CD8-positive, alpha-beta memory T cell (primary cell): ENCODE measurements at regions of chr7 and their contacts with region 1.

Region 1: GRCh38 chr7:1065263-1066260 is 21.2 kb downstream of the GPR146 start:
- DNase-seq: peak; percentile 73 to 86 (median 78)
- H3K4me3 ChIP-seq: peak overlapping the region; percentile 50
- H3K4me3 Mint-ChIP-seq: peak overlapping the region in 6 of 7 donors; percentile 45 to 76 (median 63)
- H3K27ac ChIP-seq: no peak overlapping the region
- H3K27ac Mint-ChIP-seq: peak overlapping the region in 1 of 8 donors; percentile 85
- H3K4me1 ChIP-seq: peaks cover 8% of the 10 kb centered on the region
- H3K4me1 Mint-ChIP-seq: peaks cover 2 to 8% (median 8%) of the 10 kb centered on the region in 3 donors
- H3K27me3 ChIP-seq: no peaks in the 10 kb centered on the region
- H3K27me3 Mint-ChIP-seq: no peaks in the 10 kb centered on the region

Region 2: DNA sequence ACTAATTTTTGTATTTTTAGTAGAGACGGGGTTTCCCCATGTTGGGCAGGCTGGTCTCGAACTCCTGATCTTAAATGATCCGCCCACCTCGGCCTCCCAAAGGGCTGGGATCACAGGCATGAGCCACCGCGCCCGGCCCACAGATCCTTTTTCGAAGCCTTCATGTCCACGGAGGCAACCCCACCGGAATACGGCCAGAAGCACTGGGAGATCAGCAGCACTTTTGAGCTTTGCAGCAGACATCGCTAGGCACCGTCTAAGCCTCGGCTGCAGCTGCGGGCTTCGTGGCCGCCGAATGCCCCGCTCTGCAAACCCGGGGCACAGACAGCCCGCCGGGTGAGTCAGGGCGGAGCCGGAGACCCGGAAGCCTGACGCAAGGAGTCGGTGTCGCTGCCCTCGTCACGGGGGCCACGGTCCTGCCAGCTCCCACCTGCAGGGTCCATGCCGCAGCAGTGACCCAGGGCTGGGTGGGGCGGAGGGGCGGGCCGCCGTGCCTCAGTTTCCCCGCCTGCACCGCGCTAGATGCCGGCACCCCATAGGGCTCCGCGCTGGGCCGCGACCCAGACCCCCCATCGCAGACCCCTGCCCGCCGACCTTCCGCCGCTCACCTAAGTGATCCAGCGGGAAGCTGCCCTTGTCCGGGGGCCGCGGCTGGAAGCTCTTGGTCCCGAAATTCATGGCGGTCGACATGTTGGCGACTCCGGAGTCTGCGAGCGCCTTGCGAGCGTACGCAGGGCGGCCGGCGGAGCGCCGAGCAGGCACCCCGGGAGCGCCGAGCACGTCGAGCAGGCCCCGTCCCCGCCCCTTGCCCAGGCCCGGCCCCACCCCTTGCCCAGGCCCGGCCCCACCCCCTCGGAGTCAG is 90.5 kb before region 1 on chr7 and contains the start of gene COX19:
- CTCF ChIA-PET with region 1: interaction called, 15 read pairs
- POLR2A ChIA-PET with region 1: interaction called, 5 read pairs
- DNase-seq: peak; percentile 84 to 91 (median 86)
- H3K4me3 ChIP-seq: peak within 1 kb of the TSS; percentile 79
- H3K4me3 Mint-ChIP-seq: peak within 1 kb of the TSS; percentile 90 to 97 (median 93)
- H3K27ac ChIP-seq: peak within 1 kb of the TSS; percentile 87
- H3K27ac Mint-ChIP-seq: peak within 1 kb of the TSS; percentile 90 to 98 (median 96)
- H3K4me1 ChIP-seq: peaks cover 29% of the 10 kb centered on the region
- H3K4me1 Mint-ChIP-seq: peaks cover 28 to 36% (median 35%) of the 10 kb centered on the region in 3 donors
- H3K27me3 ChIP-seq: no peaks in the 10 kb centered on the region
- H3K27me3 Mint-ChIP-seq: peaks cover 0 to 2% of the 10 kb centered on the region in 2 donors
- total RNA-seq, gene COX19: 18.9 to 21.3 TPM

Region 3: GRCh38 chr7:1020849-1021251 is 44.7 kb before region 1 on chr7:
- CTCF ChIA-PET with region 1: interaction called, 14 read pairs
- POLR2A ChIA-PET with region 1: no interaction called
- DNase-seq: no peak
- H3K4me3 ChIP-seq: no peak overlapping the region
- H3K4me3 Mint-ChIP-seq: no peak overlapping the region
- H3K27ac ChIP-seq: no peak overlapping the region
- H3K27ac Mint-ChIP-seq: no peak overlapping the region
- H3K4me1 ChIP-seq: no peaks in the 10 kb centered on the region
- H3K4me1 Mint-ChIP-seq: peaks cover 9 to 28% (median 12%) of the 10 kb centered on the region in 3 donors
- H3K27me3 ChIP-seq: no peaks in the 10 kb centered on the region
- H3K27me3 Mint-ChIP-seq: peaks cover 0 to 2% of the 10 kb centered on the region in 2 donors

Region 4: DNA sequence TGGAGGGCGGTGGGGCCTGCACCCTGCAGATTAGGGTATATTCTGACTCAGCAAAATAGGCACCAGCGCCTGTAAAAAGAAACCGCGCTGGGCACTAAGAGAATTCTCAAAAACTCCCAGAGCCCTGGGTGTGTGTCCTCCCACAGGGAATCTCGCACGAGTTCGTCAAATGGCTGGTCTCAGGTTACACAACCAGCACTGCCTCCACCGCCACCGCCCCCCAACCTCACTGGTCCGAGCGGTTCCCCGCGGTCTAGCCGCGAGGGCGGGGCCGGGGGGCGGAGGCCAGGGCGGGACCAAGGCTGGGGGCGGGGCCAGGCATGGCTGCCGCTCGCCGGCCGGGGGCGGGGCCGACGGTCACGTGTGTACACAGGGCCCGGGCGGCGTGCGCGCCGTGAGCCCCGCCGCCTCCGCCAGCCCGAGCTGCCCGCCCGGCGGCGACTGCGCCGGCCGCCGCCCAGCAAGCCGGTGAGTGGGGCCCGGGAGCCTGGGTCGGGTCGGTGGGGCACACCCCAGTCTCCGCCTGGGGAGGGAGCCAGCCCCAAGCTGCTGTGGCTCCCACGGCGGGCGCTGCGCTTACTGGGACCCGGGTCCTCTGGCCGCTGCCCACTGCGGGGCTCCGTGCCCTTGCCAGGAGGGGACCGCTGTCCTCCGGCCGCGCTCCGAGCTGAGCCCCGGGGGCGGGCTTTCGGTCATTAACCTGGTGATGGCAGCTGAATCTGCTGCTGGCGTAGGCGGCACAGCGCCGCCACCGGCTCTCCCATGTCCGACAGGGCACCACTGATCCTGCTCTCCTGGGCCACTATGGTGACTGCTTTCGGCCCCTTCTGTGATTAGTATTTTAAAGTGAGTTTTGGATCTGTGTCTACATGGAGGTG is 21.1 kb before region 1 on chr7 and contains the start of gene GPR146:
- CTCF ChIA-PET with region 1: interaction called, 12 read pairs
- POLR2A ChIA-PET with region 1: no interaction called
- DNase-seq: peak; percentile 81 to 92 (median 89)
- H3K4me3 ChIP-seq: peak within 1 kb of the TSS; percentile 68
- H3K4me3 Mint-ChIP-seq: peak within 1 kb of the TSS; percentile 83 to 92 (median 87)
- H3K27ac ChIP-seq: peak within 1 kb of the TSS; percentile 76
- H3K27ac Mint-ChIP-seq: peak within 1 kb of the TSS; percentile 67 to 90 (median 86)
- H3K4me1 ChIP-seq: peaks cover 65% of the 10 kb centered on the region
- H3K4me1 Mint-ChIP-seq: peaks cover 57 to 72% (median 59%) of the 10 kb centered on the region in 3 donors
- H3K27me3 ChIP-seq: no peaks in the 10 kb centered on the region
- H3K27me3 Mint-ChIP-seq: no peaks in the 10 kb centered on the region
- total RNA-seq, gene GPR146: 0.55 to 0.70 TPM

Region 5: GRCh38 chr7:1053002-1053478 is 12.5 kb before region 1 on chr7:
- CTCF ChIA-PET with region 1: interaction called, 17 read pairs
- POLR2A ChIA-PET with region 1: no interaction called
- DNase-seq: no peak
- H3K4me3 ChIP-seq: no peak overlapping the region
- H3K4me3 Mint-ChIP-seq: no peak overlapping the region
- H3K27ac ChIP-seq: no peak overlapping the region
- H3K27ac Mint-ChIP-seq: no peak overlapping the region
- H3K4me1 ChIP-seq: peaks cover 33% of the 10 kb centered on the region
- H3K4me1 Mint-ChIP-seq: peaks cover 7 to 21% (median 13%) of the 10 kb centered on the region in 3 donors
- H3K27me3 ChIP-seq: no peaks in the 10 kb centered on the region
- H3K27me3 Mint-ChIP-seq: no peaks in the 10 kb centered on the region

Region 6: GRCh38 chr7:1086588-1087464 is 21.3 kb after region 1 on chr7:
- CTCF ChIA-PET with region 1: interaction called, 15 read pairs
- POLR2A ChIA-PET with region 1: no interaction called
- DNase-seq: peak; percentile 58 to 78 (median 65)
- H3K4me3 ChIP-seq: peak overlapping the region; percentile 47
- H3K4me3 Mint-ChIP-seq: peak overlapping the region in 6 of 7 donors; percentile 67 to 77 (median 72)
- H3K27ac ChIP-seq: no peak overlapping the region
- H3K27ac Mint-ChIP-seq: peak overlapping the region in 3 of 8 donors; percentile 29 to 56 (median 55)
- H3K4me1 ChIP-seq: peaks cover 11% of the 10 kb centered on the region
- H3K4me1 Mint-ChIP-seq: peaks cover 6 to 13% (median 7%) of the 10 kb centered on the region in 3 donors
- H3K27me3 ChIP-seq: no peaks in the 10 kb centered on the region
- H3K27me3 Mint-ChIP-seq: no peaks in the 10 kb centered on the region

Region 7: GRCh38 chr7:1100834-1101562 is 35.4 kb after region 1 on chr7:
- CTCF ChIA-PET with region 1: no interaction called
- POLR2A ChIA-PET with region 1: no interaction called
- DNase-seq: no peak
- H3K4me3 ChIP-seq: no peak overlapping the region
- H3K4me3 Mint-ChIP-seq: no peak overlapping the region
- H3K27ac ChIP-seq: no peak overlapping the region
- H3K27ac Mint-ChIP-seq: no peak overlapping the region
- H3K4me1 ChIP-seq: peaks cover 10% of the 10 kb centered on the region
- H3K4me1 Mint-ChIP-seq: peaks cover 15 to 31% (median 19%) of the 10 kb centered on the region in 3 donors
- H3K27me3 ChIP-seq: no peaks in the 10 kb centered on the region
- H3K27me3 Mint-ChIP-seq: no peaks in the 10 kb centered on the region

Region 8: GRCh38 chr7:1197997-1198625 is 132.5 kb after region 1 on chr7:
- CTCF ChIA-PET with region 1: no interaction called
- POLR2A ChIA-PET with region 1: no interaction called
- DNase-seq: no peak
- H3K4me3 ChIP-seq: no peak overlapping the region
- H3K4me3 Mint-ChIP-seq: no peak overlapping the region
- H3K27ac ChIP-seq: no peak overlapping the region
- H3K27ac Mint-ChIP-seq: no peak overlapping the region
- H3K4me1 ChIP-seq: no peaks in the 10 kb centered on the region
- H3K4me1 Mint-ChIP-seq: no peaks in the 10 kb centered on the region
- H3K27me3 ChIP-seq: peaks cover 3% of the 10 kb centered on the region
- H3K27me3 Mint-ChIP-seq: peaks cover 7 to 13% of the 10 kb centered on the region in 2 donors